ENCODE measurements at regions of chr18 and their contacts with region 1.

Region 1: DNA sequence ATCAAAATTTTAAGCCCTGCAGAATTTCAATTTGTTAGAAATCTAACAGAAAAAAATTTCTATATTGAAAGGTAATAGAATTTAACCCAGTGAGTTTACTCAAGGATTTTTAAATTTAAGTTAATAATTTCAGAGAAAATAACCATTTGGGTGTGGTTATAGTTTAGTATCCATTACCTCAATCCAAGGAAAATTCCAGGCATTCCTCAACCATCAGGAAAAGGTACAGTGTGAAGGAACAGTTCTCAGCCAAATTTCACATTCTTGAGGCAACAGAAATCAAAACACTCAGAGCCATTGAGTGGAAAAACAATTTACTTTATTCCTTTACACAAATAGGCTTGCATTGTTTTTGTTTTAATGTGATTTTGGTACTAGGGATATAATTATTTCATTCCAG is 45.5 kb downstream of the ONECUT2 start:
- DNase-seq: no peak
- H3K4me3 ChIP-seq: no peak overlapping the region
- H3K27ac ChIP-seq: no peak overlapping the region
- H3K4me1 ChIP-seq: peaks cover 0 to 5% (median 0%) of the 10 kb centered on the region in 4 experiments; a peak in 2 of 7 replicates
- H3K27me3 ChIP-seq: no peaks in the 10 kb centered on the region
- CTCF ChIP-seq: no peak
- EP300 ChIP-seq: no peak
- POLR2A ChIP-seq: no peak
- RAD21 ChIP-seq: no peak

Region 2: DNA sequence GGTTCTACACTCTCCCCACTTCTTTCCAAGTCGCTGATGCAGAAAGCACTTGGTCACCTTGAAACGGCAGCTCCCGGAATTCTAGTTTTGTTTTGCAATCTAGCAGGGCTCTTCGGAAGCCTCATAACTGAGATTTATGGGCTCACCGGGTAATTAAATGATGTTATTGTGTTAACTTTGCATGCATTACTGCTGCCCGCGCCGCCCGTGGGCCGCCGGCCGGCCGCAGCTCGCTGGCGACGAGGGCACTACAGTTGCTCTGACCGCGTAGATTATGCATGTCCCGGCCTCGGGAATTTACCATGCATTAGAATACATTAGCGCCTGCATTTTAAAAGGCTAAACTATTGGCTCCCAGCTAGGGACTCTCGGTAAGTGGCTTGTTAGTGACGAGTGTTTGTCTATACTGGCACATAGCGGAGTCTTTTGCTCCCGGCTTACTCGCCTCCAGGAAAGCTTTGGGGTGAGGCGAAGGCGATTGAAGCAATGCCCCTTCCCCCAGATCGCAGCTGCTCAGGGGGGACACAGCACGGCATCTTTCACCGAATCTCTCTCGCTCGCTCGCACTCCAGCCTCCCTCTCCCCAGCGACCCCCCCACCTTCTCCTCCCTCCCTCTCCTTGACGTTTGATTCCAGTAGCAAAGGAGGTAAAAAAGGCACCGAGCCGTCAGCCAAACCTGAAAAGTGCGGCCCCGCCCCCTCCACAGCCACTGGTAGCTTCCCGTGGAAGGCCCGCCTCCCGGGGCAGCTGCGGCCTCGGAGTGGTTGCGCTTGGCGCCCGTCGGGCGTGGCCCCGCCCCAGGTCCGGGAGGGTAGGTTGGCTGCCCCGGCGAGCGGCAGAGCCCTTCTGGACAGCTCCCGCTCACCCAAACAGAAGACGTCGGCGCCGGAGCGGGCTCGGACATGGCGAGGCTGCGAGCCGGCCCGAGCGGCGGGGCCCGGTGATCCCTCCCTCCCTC is 45.9 kb before region 1 on chr18 and contains the start of gene ONECUT2:
- CTCF ChIA-PET with region 1: no interaction called
- POLR2A ChIA-PET with region 1: no interaction called
- DNase-seq: peak; percentile 88 to 97
- H3K4me3 ChIP-seq: peak within 1 kb of the TSS; percentile 54 to 68 (median 66)
- H3K27ac ChIP-seq: no peak within 1 kb of the TSS
- H3K4me1 ChIP-seq: peaks cover 14 to 60% (median 36%) of the 10 kb centered on the region in 4 experiments
- H3K27me3 ChIP-seq: peaks cover 70 to 93% (median 84%) of the 10 kb centered on the region in 4 experiments
- CTCF ChIP-seq: no peak
- EP300 ChIP-seq: no peak
- POLR2A ChIP-seq: no peak
- RAD21 ChIP-seq: no peak
- total RNA-seq, gene ONECUT2: 1.9 and 3.3 TPM in 2 replicates

Region 3: DNA sequence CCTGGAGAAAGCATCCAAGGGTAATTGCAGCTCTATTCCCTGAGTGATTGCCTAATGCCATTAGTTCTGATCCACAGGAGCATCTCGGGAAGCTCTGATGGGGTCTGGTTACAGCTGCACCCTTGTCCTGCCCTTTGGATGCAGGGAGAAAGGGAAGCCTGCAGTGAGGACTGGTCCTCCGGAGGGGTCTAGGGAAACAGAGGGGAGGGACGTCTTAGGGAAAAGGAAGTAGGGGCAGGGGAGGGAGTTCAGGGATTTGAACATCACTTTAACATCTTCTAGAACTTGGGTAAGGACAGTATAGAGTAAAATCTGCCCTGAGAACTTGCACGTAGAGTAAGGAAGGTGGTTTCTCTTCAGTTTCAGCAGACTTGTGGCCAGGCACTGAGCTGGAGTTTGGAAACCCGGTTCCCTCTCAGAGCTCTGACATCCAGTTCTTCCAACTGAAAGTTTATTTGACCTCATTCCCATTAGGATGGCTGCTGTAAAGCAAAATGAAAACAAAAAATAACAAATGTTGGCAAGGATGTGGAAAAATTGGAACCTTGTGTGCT is 25.1 kb before region 1 on chr18:
- CTCF ChIA-PET with region 1: no interaction called
- POLR2A ChIA-PET with region 1: no interaction called
- DNase-seq: no peak
- H3K4me3 ChIP-seq: no peak overlapping the region
- H3K27ac ChIP-seq: no peak overlapping the region
- H3K4me1 ChIP-seq: no peaks in the 10 kb centered on the region
- H3K27me3 ChIP-seq: no peaks in the 10 kb centered on the region
- CTCF ChIP-seq: no peak
- EP300 ChIP-seq: no peak
- POLR2A ChIP-seq: no peak
- RAD21 ChIP-seq: no peak

Region 4: DNA sequence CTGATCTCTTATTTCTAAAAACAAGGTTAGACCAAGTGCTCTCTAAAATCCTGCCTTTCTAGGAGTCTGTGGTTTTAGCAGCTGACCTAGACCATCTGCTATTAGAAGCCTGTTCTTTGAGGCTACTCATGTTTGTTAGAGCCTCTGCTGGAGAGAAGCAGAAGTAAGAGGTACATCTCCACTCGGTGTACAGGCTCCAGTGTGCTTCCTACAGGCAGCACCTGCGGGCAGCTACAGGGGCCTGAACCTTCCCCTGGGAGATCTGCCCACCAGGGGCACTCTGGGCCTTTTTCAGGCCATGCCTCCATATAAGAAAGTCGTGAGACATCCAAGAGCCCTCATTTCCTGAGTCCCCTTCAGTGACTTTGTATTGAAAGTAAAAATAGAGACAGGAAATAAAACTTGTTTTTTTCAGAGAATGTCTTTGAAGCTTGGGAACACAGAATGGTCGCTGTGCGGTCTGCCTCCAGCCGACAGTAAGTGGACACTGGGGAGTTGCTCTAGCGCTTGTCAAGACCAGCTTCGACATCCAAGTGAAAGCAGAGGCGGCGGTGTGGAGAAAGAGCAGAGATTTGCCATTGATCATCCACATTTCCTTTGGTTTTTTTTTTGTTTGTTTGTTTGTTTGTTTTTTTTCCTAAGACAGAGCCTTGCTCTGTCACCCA is 13.8 kb before region 1 on chr18:
- CTCF ChIA-PET with region 1: interaction called, 10 read pairs
- POLR2A ChIA-PET with region 1: no interaction called
- DNase-seq: no peak
- H3K4me3 ChIP-seq: no peak overlapping the region
- H3K27ac ChIP-seq: no peak overlapping the region
- H3K4me1 ChIP-seq: no peaks in the 10 kb centered on the region
- H3K27me3 ChIP-seq: no peaks in the 10 kb centered on the region
- CTCF ChIP-seq: peak in 2 of 3 experiments; percentile 15 to 17; a peak in 2 of 4 replicates
- EP300 ChIP-seq: no peak
- POLR2A ChIP-seq: no peak
- RAD21 ChIP-seq: peak in 1 of 2 experiments; percentile 25; a peak in 2 of 4 replicates